Panc1 (cell line): ENCODE measurements at regions of chr14 and their contacts with region 1.

Region 1: DNA sequence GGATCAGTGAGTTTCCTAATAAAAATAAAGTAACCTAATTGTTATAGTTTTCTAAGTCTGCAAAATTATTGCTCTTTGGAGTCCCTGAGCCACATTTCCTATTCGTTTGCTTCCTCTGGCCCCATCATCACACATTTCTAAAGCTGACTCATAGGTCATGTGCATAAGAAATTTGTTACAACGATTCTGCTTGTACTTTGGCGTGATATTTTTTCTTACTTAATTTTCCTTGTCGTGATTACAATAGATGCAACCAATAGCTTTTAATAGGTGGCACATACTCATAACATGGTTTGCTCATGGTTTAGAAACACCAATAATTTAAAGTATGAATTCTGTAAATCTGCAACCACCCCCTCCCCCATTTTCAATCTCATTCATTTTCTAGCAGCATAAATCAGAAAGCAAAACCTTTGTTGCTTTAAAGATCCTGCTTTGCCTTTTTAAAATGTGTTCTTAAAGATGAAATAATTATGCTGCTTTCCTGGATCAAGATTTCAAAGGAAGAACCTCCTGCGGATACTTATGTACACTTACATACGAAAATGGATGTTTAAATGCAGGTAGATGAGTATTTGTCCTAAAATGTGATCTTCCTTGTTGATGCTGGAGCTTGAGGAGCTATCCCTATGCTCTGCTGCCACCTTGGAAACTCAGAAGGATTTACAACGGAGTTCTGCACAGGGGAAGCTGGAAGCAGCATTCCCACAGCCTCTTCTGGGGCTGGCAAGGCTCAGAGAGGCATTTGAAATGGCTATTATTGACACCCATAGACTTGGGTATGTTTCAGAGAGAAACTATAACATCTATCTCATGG is 1.7 kb upstream of the FLRT2 start:
- DNase-seq: no peak
- ATAC-seq: peak; percentile 76
- H3K4me3 ChIP-seq: peak overlapping the region; percentile 47 to 72
- H3K27ac ChIP-seq: no peak overlapping the region
- H3K4me1 ChIP-seq: peaks cover 8% of the 10 kb centered on the region; the same call in 1 of the 2 replicates
- H3K27me3 ChIP-seq: peaks cover 5% of the 10 kb centered on the region
- CTCF ChIP-seq: peak; percentile 69

Region 2: DNA sequence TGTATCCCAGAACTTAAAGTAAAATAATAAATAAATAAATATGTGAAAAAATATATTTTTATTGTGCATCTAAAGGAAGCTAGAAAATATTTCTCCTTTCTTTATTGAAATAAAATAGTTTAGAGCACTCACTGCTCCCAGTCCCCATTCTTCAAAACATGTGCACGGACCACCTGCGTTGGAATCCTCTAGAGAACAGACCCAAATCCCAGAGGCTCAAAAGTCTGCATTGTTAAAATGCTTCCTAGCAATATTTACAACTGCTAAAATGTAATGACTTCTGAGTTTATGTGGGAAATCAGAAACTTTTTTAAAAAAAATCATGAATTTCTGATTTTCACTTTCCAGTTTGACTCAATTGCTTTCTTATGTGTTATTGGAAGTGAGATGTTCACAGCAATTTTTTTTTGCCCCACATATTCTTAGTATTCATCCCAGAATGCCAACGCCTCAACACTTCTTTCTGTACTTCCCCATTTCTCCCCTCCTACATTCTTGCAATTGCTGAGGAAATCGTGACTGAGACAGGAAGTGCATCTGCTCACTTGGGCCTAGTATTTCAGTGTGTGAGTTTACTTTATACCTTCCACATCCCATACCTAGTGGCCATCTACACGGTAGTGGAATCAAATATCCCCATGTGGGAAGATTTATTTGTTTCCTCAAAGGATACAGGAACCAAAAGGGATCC is 114.3 kb before region 1 on chr14:
- CTCF ChIA-PET with region 1: no interaction called
- POLR2A ChIA-PET with region 1: no interaction called
- in situ Hi-C with region 1: no loop called
- intact Hi-C with region 1: loop called (anchors 5 kb)
- DNase-seq: no peak
- ATAC-seq: no peak
- H3K4me3 ChIP-seq: no peak overlapping the region
- H3K27ac ChIP-seq: no peak overlapping the region
- H3K4me1 ChIP-seq: no peaks in the 10 kb centered on the region
- H3K27me3 ChIP-seq: no peaks in the 10 kb centered on the region
- CTCF ChIP-seq: no peak

Region 3: DNA sequence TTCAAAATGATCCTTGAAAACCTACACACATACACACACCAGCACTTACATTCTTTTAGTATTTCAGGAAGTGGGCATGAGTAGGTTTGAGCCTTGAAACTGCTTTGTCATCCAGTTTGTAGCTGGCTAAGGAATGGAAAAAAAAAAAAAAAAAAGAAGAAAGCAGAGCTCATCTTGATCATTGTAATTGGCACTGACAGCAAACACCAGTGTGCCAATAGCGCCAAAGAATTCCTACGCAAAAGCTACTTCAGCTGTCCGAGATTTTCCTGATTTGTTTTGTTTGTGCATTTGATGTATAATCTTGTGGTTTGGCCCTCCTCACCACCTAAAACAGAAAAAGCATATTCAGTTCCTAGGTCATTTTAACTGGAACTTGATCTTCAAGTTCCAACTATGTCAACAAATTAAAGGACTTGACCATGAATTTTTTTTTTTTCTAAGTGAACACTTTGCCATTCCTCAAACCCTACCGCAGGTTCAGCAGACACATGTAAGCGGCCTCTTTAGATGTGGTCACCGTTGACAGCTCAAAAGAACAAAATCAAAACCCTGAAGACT is 58.9 kb after region 1 on chr14:
- CTCF ChIA-PET with region 1: no interaction called
- POLR2A ChIA-PET with region 1: no interaction called
- in situ Hi-C with region 1: no loop called
- intact Hi-C with region 1: no loop called
- DNase-seq: no peak
- ATAC-seq: no peak
- H3K4me3 ChIP-seq: no peak overlapping the region
- H3K27ac ChIP-seq: no peak overlapping the region
- H3K4me1 ChIP-seq: no peaks in the 10 kb centered on the region
- H3K27me3 ChIP-seq: no peaks in the 10 kb centered on the region
- CTCF ChIP-seq: no peak